Activated CD4-positive, alpha-beta memory T cell treated with anti-CD3 and anti-CD28 coated beads for 36 hours (primary cell): ENCODE measurements at regions of chr4 and their contacts with region 1.

Region 1: DNA sequence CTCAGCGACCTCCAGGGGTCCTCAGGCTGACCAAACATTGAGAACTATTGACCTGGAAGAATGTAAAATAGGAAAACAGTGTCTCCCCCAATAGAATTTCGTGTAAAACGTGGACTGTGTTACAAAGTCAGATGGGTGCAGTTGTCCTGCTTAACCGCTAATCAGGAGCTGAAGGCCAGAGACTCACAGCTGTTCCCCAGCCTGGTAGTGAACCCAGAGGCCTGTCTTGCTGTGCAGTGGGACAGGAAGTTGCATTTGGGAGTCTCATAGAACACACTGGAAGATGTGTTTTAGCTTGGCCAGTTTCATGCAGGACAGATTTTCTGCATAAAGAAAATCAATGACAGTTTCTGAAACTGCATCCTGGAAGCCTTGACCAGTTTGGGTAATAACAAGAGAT is 151.5 kb downstream of the PTTG2 start:
- DNase-seq: no peak
- H3K4me3 Mint-ChIP-seq: no peak overlapping the region
- H3K27ac Mint-ChIP-seq: no peak overlapping the region
- H3K4me1 Mint-ChIP-seq: peaks cover 5% of the 10 kb centered on the region
- H3K27me3 Mint-ChIP-seq: no peaks in the 10 kb centered on the region

Region 2: GRCh38 chr4:38099908-38100407 is 11.8 kb before region 1 on chr4:
- CTCF ChIA-PET with region 1: interaction called, 3 read pairs
- POLR2A ChIA-PET with region 1: no interaction called
- intact Hi-C with region 1: loop called (anchors 1 kb)
- DNase-seq: no peak
- H3K4me3 Mint-ChIP-seq: no peak overlapping the region
- H3K27ac Mint-ChIP-seq: no peak overlapping the region
- H3K4me1 Mint-ChIP-seq: peaks cover 5% of the 10 kb centered on the region
- H3K27me3 Mint-ChIP-seq: no peaks in the 10 kb centered on the region